ENCODE measurements at regions of chr16 and their contacts with region 1.

Region 1: DNA sequence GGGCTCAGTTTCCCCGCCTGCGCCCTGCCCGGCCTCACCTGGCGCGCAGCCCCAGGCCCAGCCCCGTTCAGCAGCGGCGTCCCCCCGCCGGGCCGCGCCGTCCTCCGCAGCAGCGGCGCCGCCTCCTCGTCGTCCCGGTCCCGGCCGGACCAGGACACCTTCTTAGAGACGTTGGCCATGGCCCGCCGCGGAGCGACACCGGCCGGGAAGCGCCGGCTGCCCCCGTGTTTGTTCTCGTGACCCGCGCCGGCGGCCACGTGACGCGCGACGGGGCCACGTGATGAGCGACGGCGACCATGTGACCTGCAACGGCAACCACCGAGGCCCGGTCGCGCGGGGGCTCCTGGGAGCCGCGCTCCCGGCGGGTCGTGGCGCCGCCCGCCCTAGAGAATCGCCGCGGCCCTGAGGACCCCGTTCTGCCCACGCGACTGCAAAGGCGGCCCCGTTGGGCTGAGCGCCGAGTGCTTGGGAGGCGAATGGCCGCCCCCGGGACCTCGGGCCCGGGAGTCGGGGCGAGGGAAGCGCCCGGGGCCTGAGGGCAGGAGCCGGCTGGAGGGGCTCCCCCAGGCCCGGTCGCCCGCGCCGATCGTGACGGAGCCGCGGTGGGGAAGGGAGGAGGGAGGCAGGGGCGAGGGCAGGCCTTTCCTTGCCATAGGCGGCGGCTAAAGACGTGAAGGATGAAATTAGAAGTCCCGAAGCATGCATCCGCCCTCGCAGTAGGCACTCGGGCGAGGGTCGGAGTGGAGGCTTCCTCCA is at the start of gene CLCN7:
- DNase-seq: peak; percentile 80
- H3K4me3 ChIP-seq: peak within 1 kb of the TSS; percentile 66 to 77 (median 74)
- H3K27ac ChIP-seq: peak within 1 kb of the TSS; percentile 54
- H3K4me1 ChIP-seq: peaks cover 24% of the 10 kb centered on the region
- H3K27me3 ChIP-seq: no peaks in the 10 kb centered on the region
- CTCF ChIP-seq: no peak
- total RNA-seq, gene CLCN7: 52.9 to 66.2 TPM

Region 2: GRCh38 chr16:1258906-1259759 is 215.8 kb before region 1 on chr16:
- CTCF ChIA-PET with region 1: no interaction called
- dilution Hi-C with region 1: loop called (anchors 25 kb)
- in situ Hi-C with region 1: no loop called
- intact Hi-C with region 1: no loop called
- DNase-seq: no peak
- H3K4me3 ChIP-seq: peak overlapping the region in 1 of 3 experiments; percentile 14
- H3K27ac ChIP-seq: no peak overlapping the region
- H3K4me1 ChIP-seq: peaks cover 7% of the 10 kb centered on the region
- H3K27me3 ChIP-seq: peaks cover 23% of the 10 kb centered on the region
- CTCF ChIP-seq: no peak

Region 3: DNA sequence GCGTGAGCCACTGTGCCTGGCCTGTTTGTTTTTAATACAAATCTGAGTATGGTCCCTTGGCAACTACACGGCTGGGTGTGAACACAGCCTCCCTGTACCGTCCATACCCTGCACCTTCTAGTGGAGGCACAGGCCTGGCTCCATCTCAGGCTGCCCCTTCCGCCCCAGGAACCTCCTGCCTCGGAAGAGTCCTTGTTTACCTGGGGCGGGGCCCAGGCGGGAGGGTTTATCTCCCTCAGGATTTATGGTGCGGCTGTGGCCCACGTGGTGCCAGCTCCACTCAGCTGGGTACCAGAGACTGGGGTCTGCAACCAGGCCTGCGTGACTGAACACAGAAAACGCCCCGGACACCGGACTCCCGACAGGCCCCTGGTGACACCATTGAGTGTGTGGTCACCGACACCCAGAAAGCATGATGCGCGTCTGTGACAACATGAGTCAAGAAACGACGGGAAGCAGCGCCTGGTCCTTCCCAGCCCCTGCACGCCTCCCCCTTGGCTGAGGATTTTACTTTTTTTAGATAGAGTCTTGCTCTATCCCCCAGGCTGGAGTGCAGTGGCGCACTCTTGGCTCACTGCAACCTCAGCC is 79.4 kb before region 1 on chr16:
- CTCF ChIA-PET with region 1: no interaction called
- dilution Hi-C with region 1: no loop called
- in situ Hi-C with region 1: no loop called
- intact Hi-C with region 1: no loop called
- DNase-seq: no peak
- H3K4me3 ChIP-seq: no peak overlapping the region
- H3K27ac ChIP-seq: no peak overlapping the region
- H3K4me1 ChIP-seq: no peaks in the 10 kb centered on the region
- H3K27me3 ChIP-seq: no peaks in the 10 kb centered on the region
- CTCF ChIP-seq: no peak

Region 4: GRCh38 chr16:1420111-1420540 is 54.8 kb before region 1 on chr16:
- CTCF ChIA-PET with region 1: no interaction called
- dilution Hi-C with region 1: no loop called
- in situ Hi-C with region 1: no loop called
- intact Hi-C with region 1: loop called (anchors 5 kb)
- DNase-seq: no peak
- H3K4me3 ChIP-seq: peak overlapping the region; percentile 69 to 95 (median 91)
- H3K27ac ChIP-seq: peak overlapping the region; percentile 66
- H3K4me1 ChIP-seq: peaks cover 6% of the 10 kb centered on the region
- H3K27me3 ChIP-seq: no peaks in the 10 kb centered on the region
- CTCF ChIP-seq: no peak

Region 5: GRCh38 chr16:1691276-1691675 is 216.3 kb after region 1 on chr16:
- CTCF ChIA-PET with region 1: no interaction called
- dilution Hi-C with region 1: loop called (anchors 10 kb)
- in situ Hi-C with region 1: no loop called
- intact Hi-C with region 1: no loop called
- DNase-seq: peak; percentile 75
- H3K4me3 ChIP-seq: no peak overlapping the region
- H3K27ac ChIP-seq: peak overlapping the region; percentile 97
- H3K4me1 ChIP-seq: peaks cover 56% of the 10 kb centered on the region
- H3K27me3 ChIP-seq: no peaks in the 10 kb centered on the region
- CTCF ChIP-seq: peak; percentile 19 to 48

Measured in mammary epithelial cell (primary cell).